CD4-positive, alpha-beta memory T cell (primary cell): ENCODE measurements at regions of chr16 and their contacts with region 1.

Region 1: DNA sequence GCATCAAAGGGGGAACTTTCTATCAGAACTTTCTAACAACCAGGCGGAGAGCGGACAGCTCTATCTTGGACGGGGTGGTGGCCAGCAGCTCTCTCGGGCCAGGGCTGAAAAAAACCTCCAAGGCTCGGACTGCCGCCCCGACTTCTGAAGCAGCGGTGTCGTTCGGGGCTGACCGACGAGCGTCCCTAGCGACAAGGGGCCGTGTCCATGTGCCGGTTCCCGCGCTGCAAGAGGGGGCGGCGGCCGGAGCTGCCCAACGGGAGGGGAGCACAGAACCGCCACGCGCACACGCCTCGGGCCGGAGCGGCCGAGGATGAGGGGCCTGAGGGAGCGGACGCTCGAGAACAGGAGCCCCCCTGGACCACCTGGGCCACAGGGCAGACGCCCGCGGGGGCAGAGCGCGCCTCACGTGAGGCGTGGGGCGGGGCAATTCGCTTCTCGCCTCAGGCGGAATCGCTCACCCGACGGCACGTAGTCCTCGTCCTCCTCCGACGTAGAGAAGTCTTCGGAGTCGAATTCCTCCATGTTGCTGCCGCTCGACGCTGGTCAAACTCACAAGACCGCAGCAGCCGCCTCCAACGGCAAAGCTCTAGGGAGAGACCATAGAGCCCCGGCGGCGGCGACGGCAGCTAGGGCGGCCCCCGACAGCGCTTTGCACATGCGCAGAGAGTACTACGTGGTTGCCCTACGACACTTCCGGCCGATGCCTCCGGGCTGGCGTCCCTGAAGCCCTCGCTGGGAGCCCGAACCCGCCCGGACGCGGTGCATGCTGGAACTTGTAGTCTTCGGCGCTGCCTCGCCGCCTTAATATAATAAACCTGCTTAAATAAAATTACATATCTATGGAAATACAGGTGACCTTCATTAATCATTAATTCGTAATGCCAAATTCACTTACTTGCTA is at the start of gene CFDP1:
- DNase-seq: peak; percentile 96 to 98 (median 97)
- H3K4me3 ChIP-seq: peak within 1 kb of the TSS; percentile 61 to 90
- H3K4me3 Mint-ChIP-seq: peak within 1 kb of the TSS; percentile 89 to 95 (median 94)
- H3K27ac ChIP-seq: peak within 1 kb of the TSS; percentile 96
- H3K27ac Mint-ChIP-seq: peak within 1 kb of the TSS; percentile 92 to 98 (median 97)
- H3K4me1 ChIP-seq: peaks cover 30% of the 10 kb centered on the region
- H3K4me1 Mint-ChIP-seq: peaks cover 16 to 56% (median 43%) of the 10 kb centered on the region in 4 donors
- H3K27me3 ChIP-seq: no peaks in the 10 kb centered on the region
- H3K27me3 Mint-ChIP-seq: no peaks in the 10 kb centered on the region
- total RNA-seq, gene CFDP1: 41.8 to 42.4 TPM

Region 2: DNA sequence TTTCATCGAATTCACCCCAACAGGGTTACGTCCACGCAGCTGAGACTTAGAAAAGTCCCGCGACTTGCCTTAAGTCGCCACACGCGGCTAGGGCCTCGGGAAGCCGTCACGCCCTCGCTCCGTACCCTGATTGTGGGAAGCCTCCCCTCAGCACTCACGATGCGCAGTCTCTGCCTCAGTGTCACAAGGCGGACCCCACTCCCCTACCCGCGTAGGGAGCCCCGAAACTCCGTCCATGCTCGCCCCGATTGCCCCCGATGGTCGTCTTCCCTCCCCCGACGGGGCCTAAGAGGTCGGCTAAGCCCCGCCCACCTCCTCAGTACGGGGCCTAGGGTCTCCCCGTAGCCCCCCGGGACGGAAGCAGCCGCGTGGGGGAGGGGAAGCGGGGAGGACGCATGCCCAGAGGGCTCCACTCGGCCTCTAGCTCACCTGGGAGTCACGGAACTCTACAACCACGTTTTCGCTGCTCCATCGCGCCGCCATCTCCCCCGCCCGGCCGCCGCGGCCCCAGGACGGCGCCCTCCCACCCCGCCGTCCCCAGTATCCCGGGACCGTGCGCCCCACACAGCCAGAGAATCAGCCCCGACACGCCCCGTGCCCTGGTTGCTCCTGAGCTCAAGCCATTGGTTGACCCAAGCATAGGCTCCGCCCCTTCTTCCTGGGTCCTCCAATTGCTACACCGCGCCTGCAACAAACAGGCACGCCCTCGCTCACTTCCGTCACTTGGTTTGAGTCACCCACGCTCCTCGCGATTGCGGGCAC is 448.4 kb before region 1 on chr16 and contains the start of gene WDR59:
- CTCF ChIA-PET with region 1: no interaction called
- POLR2A ChIA-PET with region 1: interaction called, 6 read pairs
- intact Hi-C with region 1: loop called (anchors 2 kb)
- DNase-seq: peak; percentile 97 to 100 (median 99)
- H3K4me3 ChIP-seq: peak within 1 kb of the TSS; percentile 90 to 96
- H3K4me3 Mint-ChIP-seq: peak within 1 kb of the TSS; percentile 93 to 98 (median 96)
- H3K27ac ChIP-seq: peak within 1 kb of the TSS; percentile 87
- H3K27ac Mint-ChIP-seq: peak within 1 kb of the TSS; percentile 84 to 99 (median 95)
- H3K4me1 ChIP-seq: peaks cover 18% of the 10 kb centered on the region
- H3K4me1 Mint-ChIP-seq: peaks cover 8 to 29% (median 19%) of the 10 kb centered on the region in 4 donors
- H3K27me3 ChIP-seq: no peaks in the 10 kb centered on the region
- H3K27me3 Mint-ChIP-seq: no peaks in the 10 kb centered on the region
- total RNA-seq, gene WDR59: 116 to 127 TPM

Region 3: GRCh38 chr16:75148311-75149195 is 284.5 kb before region 1 on chr16 and contains the start of gene ZFP1:
- CTCF ChIA-PET with region 1: no interaction called
- POLR2A ChIA-PET with region 1: interaction called, 3 read pairs
- intact Hi-C with region 1: loop called (anchors 1 kb)
- DNase-seq: peak; percentile 92 to 96 (median 93)
- H3K4me3 ChIP-seq: peak within 1 kb of the TSS; percentile 44 to 95
- H3K4me3 Mint-ChIP-seq: peak within 1 kb of the TSS; percentile 82 to 91 (median 88)
- H3K27ac ChIP-seq: peak within 1 kb of the TSS; percentile 75
- H3K27ac Mint-ChIP-seq: peak within 1 kb of the TSS; percentile 75 to 93 (median 91)
- H3K4me1 ChIP-seq: peaks cover 5% of the 10 kb centered on the region
- H3K4me1 Mint-ChIP-seq: peaks cover 8 to 23% (median 13%) of the 10 kb centered on the region in 4 donors
- H3K27me3 ChIP-seq: no peaks in the 10 kb centered on the region
- H3K27me3 Mint-ChIP-seq: no peaks in the 10 kb centered on the region
- total RNA-seq, gene ZFP1: 11.7 to 13.4 TPM

Region 4: DNA sequence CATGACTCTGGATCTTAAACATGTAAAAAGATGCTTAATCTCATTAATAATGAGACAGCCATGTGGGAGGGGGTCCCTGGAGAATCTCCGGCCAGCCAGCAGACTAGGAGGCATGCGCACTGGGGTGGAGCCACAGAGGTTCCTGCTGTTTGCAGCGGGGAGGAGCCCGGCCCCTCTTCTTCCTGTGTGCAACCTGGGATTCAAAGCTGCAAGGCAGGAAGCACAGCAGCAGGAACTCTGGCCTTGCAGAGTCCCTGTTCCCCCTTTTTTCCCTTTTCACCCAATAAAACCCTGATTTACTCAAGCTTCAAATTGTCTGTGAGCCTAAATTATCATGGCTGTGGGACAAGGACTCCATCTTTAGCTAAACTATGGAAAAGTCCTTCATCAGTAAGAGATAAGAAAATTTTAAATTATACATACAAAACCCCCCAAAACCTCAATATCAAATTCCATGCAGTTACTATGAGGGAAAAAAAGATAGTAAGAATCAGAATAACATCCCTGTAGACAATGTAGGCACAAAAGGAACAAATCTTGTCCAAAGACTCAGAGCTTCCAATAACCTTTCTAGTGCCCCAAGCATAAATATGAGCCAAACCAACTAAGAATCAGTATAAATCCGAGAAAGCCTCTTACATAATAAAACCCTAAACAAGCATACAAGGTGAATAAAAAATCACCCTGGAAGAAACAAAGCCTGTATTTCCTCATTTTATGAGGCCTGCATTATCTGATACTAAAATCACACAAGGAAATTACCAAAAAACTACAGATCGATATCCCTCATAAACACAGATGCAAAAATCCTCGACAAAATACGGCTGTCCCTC is 11.9 kb before region 1 on chr16:
- CTCF ChIA-PET with region 1: no interaction called
- POLR2A ChIA-PET with region 1: interaction called, 11 read pairs
- intact Hi-C with region 1: no loop called
- DNase-seq: no peak
- H3K4me3 ChIP-seq: no peak overlapping the region
- H3K4me3 Mint-ChIP-seq: peak overlapping the region in 7 of 8 donors; percentile 9 to 70 (median 33)
- H3K27ac ChIP-seq: no peak overlapping the region
- H3K27ac Mint-ChIP-seq: peak overlapping the region; percentile 37 to 82 (median 54)
- H3K4me1 ChIP-seq: peaks cover 18% of the 10 kb centered on the region
- H3K4me1 Mint-ChIP-seq: peaks cover 16 to 33% (median 27%) of the 10 kb centered on the region in 4 donors
- H3K27me3 ChIP-seq: no peaks in the 10 kb centered on the region
- H3K27me3 Mint-ChIP-seq: no peaks in the 10 kb centered on the region

Region 5: GRCh38 chr16:75471723-75472633 is 38.9 kb after region 1 on chr16:
- CTCF ChIA-PET with region 1: interaction called, 56 read pairs
- POLR2A ChIA-PET with region 1: no interaction called
- intact Hi-C with region 1: no loop called
- DNase-seq: peak in 4 of 5 donors; percentile 36 to 51 (median 48)
- H3K4me3 ChIP-seq: no peak overlapping the region
- H3K4me3 Mint-ChIP-seq: no peak overlapping the region
- H3K27ac ChIP-seq: no peak overlapping the region
- H3K27ac Mint-ChIP-seq: peak overlapping the region in 3 of 7 donors; percentile 26 to 58 (median 56)
- H3K4me1 ChIP-seq: no peaks in the 10 kb centered on the region
- H3K4me1 Mint-ChIP-seq: peaks cover 0 to 4% (median 3%) of the 10 kb centered on the region in 4 donors
- H3K27me3 ChIP-seq: no peaks in the 10 kb centered on the region
- H3K27me3 Mint-ChIP-seq: no peaks in the 10 kb centered on the region

Region 6: DNA sequence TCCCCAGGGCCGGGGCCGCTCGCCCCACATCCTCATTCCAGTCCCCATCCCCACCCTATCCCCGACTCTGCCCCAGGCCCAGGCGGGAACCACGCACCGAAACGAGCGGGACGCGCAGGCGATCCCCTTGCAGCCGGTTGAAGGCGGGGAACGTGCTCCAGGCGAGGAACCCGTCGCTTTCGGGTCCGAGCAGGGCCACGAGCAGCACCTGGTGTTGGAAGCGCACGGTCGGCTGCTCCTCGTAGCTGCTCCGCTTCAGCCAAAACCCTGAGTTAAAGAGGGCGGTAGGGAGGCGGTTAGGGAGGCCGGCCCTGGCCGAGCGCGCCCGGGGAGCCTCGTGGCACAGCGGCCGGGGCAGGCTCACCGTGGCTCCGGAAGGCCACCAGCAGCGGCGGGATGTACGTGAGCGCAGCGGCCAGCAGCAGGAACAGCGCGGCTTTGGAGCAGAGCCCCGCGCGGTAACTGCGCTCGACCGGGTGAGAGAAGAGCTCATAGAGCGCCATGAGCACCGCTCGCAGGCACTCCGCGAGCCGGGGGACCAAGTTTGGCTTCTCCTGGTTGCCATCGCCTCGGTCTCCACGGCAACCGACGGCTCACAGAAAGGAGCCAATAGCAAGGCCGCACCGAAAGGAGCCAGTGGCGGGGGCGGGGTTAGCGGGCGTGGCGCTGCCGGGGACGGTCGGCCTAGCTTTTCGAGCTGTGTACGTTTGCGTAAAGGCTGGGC is 122.8 kb after region 1 on chr16 and contains the start of gene TMEM231:
- CTCF ChIA-PET with region 1: no interaction called
- POLR2A ChIA-PET with region 1: interaction called, 8 read pairs
- intact Hi-C with region 1: loop called (anchors 1 kb)
- DNase-seq: peak; percentile 94 to 98 (median 96)
- H3K4me3 ChIP-seq: peak within 1 kb of the TSS; percentile 75 to 76
- H3K4me3 Mint-ChIP-seq: peak within 1 kb of the TSS; percentile 87 to 95 (median 90)
- H3K27ac ChIP-seq: peak within 1 kb of the TSS; percentile 68
- H3K27ac Mint-ChIP-seq: peak within 1 kb of the TSS; percentile 89 to 98 (median 95)
- H3K4me1 ChIP-seq: peaks cover 15% of the 10 kb centered on the region
- H3K4me1 Mint-ChIP-seq: peaks cover 3 to 16% (median 10%) of the 10 kb centered on the region in 4 donors
- H3K27me3 ChIP-seq: no peaks in the 10 kb centered on the region
- H3K27me3 Mint-ChIP-seq: peaks cover 0 to 1% of the 10 kb centered on the region in 2 donors
- total RNA-seq, gene TMEM231: 2.4 to 2.6 TPM

Region 7: GRCh38 chr16:75566040-75566810 is 133.1 kb after region 1 on chr16 and contains the start of gene GABARAPL2:
- CTCF ChIA-PET with region 1: no interaction called
- POLR2A ChIA-PET with region 1: interaction called, 6 read pairs
- intact Hi-C with region 1: loop called (anchors 1 kb)
- DNase-seq: peak; percentile 87 to 95 (median 91)
- H3K4me3 ChIP-seq: peak within 1 kb of the TSS; percentile 68 to 100
- H3K4me3 Mint-ChIP-seq: peak within 1 kb of the TSS; percentile 89 to 100 (median 97)
- H3K27ac ChIP-seq: peak within 1 kb of the TSS; percentile 82
- H3K27ac Mint-ChIP-seq: peak within 1 kb of the TSS; percentile 84 to 100 (median 97)
- H3K4me1 ChIP-seq: peaks cover 48% of the 10 kb centered on the region
- H3K4me1 Mint-ChIP-seq: peaks cover 26 to 57% (median 38%) of the 10 kb centered on the region in 4 donors
- H3K27me3 ChIP-seq: no peaks in the 10 kb centered on the region
- H3K27me3 Mint-ChIP-seq: peaks cover 0 to 7% of the 10 kb centered on the region in 2 donors
- total RNA-seq, gene GABARAPL2: 91.9 to 100 TPM